Activated CD4-positive, alpha-beta memory T cell treated with anti-CD3 and anti-CD28 coated beads, Interleukin-2, amount 10 ng/mL, durations not matched to agents 7 days and 5 days (primary cell): ENCODE measurements at regions of chr19 and their contacts with region 1.

Region 1: DNA sequence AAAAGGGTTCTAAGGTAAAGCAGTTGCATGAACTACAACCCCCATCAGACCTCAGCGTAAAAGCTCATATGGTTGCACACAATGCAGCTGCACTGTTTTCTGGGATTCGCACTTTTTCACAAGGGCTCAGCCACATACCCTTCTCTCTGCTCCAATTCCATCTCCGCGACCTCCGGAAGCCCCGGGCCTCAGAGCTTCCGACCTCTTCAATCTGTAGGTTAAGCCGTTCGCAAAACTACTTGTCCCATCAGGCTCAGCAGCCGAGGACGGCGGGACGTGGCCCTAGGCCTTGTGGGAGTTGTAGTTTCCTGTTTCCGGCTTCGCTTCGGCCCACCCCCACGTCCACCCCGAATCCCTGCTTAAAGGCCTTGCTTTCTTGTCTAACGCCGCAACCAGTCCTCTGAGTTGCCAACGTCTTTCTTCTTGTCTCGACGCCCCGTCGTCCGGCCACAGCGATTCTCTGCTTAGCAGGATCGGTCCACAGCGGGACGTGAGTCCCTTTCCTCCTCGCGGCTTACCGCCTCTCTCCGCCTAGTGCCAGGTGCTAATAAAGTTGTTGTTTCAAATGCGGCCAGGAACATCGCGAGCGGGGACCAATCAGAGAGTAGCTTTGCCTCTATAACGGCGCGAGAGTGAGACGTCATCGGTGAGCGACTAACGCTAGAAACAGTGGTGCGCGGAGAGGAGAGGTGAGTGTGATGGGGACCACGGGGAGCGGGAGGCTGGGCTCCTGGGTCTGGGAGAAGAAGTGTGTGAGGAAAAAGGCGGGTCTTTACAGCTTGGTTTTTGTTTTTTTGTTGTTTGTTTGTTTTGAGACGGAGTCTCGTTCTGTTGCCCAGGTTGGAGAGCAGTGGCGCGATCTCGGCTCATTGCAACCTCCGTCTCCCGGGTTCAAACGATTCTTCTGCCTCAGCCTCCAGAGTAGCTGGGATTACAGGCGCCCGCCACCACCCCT is at the starts of genes PRPF31 and TFPT:
- DNase-seq: peak; percentile 97
- H3K4me3 Mint-ChIP-seq: peak within 1 kb of the TSS; percentile 86
- H3K27ac Mint-ChIP-seq: peak within 1 kb of the TSS; percentile 74
- H3K4me1 Mint-ChIP-seq: peaks cover 35% of the 10 kb centered on the region
- H3K27me3 Mint-ChIP-seq: no peaks in the 10 kb centered on the region
- total RNA-seq, gene PRPF31: 53.5 to 55.0 TPM
- total RNA-seq, gene TFPT: 44.4 to 47.1 TPM

Region 2: DNA sequence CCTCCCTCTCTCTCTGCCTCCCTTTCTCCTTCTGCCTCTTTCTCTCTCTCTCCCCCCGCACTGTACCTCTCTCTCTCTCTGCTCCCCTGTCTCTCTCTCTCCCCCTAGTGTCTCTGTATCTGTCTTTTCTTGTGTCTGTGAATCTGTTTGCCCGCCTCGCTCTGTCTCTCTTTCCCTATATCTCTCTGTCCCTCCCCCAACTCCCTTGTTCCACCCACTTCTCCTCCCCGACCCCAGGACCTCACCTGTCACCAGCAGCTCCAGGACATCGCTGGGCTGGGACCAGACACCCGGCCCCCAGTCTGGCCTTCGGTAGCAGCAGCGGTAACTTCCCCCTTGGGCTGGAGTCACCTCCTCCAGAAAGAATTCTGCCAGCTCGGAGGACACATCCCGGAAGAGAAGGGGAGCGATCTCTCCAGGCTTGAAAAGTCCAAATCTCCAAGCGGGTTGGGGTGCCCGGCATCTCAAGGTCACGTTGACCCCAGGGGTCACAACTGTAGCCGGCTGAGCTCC is 18.7 kb before region 1 on chr19:
- CTCF ChIA-PET with region 1: interaction called, 6 read pairs
- POLR2A ChIA-PET with region 1: interaction called, 25 read pairs
- DNase-seq: no peak
- H3K4me3 Mint-ChIP-seq: peak overlapping the region; percentile 53
- H3K27ac Mint-ChIP-seq: peak overlapping the region; percentile 11
- H3K4me1 Mint-ChIP-seq: peaks cover 16% of the 10 kb centered on the region
- H3K27me3 Mint-ChIP-seq: peaks cover 15% of the 10 kb centered on the region

Region 3: GRCh38 chr19:54102421-54103169 is 12.8 kb before region 1 on chr19 and contains the start of gene NDUFA3:
- CTCF ChIA-PET with region 1: interaction called, 6 read pairs
- POLR2A ChIA-PET with region 1: interaction called, 25 read pairs
- DNase-seq: peak; percentile 99
- H3K4me3 Mint-ChIP-seq: peak within 1 kb of the TSS; percentile 97
- H3K27ac Mint-ChIP-seq: peak within 1 kb of the TSS; percentile 90
- H3K4me1 Mint-ChIP-seq: peaks cover 30% of the 10 kb centered on the region
- H3K27me3 Mint-ChIP-seq: no peaks in the 10 kb centered on the region
- total RNA-seq, gene NDUFA3: 115 to 116 TPM

Region 4: GRCh38 chr19:54203151-54203611 is 87.8 kb after region 1 on chr19:
- CTCF ChIA-PET with region 1: no interaction called
- POLR2A ChIA-PET with region 1: interaction called, 12 read pairs
- DNase-seq: no peak
- H3K4me3 Mint-ChIP-seq: peak overlapping the region; percentile 91
- H3K27ac Mint-ChIP-seq: peak overlapping the region; percentile 55
- H3K4me1 Mint-ChIP-seq: peaks cover 78% of the 10 kb centered on the region
- H3K27me3 Mint-ChIP-seq: no peaks in the 10 kb centered on the region